Left cardiac atrium (tissue), 4 donors: ENCODE measurements at regions of chr10 and their contacts with region 1.

Region 1: GRCh38 chr10:128377988-128378387 is 251.8 kb upstream of the MKI67 start:
- DNase-seq: no peak
- ATAC-seq: peak; percentile 38 to 55

Region 2: GRCh38 chr10:128324077-128324827 is 53.7 kb before region 1 on chr10:
- intact Hi-C with region 1: loop called in 1 of 2 experiments (anchors 5 kb)
- DNase-seq: peak; percentile 59
- ATAC-seq: peak; percentile 90 to 94

Region 3: DNA sequence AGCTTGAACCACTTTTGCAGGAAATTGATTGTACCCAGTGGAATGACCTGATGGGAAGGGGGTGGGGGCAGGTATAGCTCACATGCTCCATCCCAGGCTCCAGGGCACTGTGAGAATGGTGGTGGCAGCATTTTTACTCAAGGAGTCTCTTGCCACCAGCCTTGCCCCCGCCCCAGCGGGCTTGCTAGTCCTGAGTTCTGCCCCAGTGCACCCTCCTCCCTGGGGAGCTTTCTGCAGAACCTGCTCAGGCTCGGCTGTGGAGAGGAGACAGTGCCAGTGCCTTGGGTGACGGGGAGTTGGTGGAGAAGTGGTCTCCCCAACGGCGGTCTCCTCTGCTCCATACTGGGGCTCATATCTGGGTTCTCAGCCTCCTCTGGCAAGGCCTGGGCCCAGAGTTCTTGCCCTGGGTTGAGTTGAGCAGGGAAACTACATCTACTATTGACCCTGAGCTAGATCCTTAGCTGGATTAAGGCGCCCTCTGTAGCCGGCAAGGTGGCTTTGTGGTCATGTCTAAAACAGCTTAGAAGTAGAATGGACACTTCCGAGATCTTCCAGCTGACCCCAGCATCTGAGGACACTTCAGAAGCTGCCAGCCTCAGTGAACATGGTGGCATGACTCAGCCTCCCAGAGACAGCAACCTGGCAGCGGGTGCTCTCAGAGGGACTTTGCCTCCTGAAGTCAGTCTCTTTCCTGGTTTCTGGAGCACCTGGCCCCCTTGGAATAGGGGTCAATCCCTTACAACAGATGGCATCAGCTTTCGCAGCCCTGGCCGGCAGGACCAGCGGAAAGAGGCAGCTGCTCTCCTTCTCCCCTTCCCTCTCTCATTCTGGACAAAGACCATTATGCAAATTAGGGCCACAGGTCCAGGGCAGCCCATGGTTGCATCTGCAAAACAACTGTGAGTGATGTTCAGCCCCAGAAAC is 111.6 kb after region 1 on chr10:
- intact Hi-C with region 1: no loop called
- DNase-seq: no peak
- ATAC-seq: no peak

Region 4: GRCh38 chr10:128664729-128665128 is 286.7 kb after region 1 on chr10:
- intact Hi-C with region 1: no loop called
- DNase-seq: no peak
- ATAC-seq: no peak